ENCODE measurements at regions of chr5 and their contacts with region 1.

Region 1: DNA sequence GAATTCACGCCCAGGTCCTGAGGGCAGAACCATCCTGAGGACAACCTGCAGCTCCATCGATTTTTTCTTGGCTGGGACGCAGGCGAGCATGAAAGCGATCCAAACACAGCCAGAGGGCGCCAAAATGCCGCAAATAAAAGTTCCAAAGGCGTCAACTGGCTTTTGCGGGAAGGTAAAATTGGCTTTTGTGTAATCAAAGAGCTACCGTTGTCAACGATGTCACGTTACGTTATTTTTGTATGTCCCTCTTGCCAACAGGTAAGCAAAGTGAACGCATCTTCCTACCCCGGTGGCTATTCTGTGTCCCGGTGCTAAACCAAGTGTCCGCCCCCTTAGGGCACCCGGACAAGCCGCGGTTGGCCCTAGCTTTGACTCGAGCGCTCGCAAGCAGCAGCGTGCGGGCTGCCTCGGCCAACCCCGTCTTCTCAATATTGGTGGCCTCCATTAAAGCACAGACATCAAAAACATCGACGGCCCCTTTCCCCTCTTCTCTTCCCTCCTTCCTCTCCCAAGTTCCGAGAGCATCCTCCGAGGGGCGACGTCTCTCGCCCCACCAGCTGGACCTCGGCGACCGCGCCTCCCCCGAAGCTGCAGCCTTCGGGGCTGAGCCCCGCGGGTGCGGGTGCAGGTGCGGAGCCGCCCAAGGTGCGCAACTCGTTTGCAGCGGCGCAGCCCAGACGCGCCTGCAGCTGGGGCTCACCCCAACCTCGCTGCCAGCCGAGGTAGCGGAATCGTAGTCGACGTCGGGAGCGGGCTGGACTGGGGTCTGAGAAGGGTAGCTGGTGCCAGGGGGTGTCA is 1.1 kb upstream of the BASP1 start:
- DNase-seq: peak; percentile 79
- H3K4me3 ChIP-seq: peak overlapping the region; percentile 9 to 67 (median 30)
- H3K27ac ChIP-seq: no peak overlapping the region
- H3K4me1 ChIP-seq: peaks cover 17% of the 10 kb centered on the region
- H3K27me3 ChIP-seq: no peaks in the 10 kb centered on the region
- CTCF ChIP-seq: peak; percentile 84 to 86

Region 2: DNA sequence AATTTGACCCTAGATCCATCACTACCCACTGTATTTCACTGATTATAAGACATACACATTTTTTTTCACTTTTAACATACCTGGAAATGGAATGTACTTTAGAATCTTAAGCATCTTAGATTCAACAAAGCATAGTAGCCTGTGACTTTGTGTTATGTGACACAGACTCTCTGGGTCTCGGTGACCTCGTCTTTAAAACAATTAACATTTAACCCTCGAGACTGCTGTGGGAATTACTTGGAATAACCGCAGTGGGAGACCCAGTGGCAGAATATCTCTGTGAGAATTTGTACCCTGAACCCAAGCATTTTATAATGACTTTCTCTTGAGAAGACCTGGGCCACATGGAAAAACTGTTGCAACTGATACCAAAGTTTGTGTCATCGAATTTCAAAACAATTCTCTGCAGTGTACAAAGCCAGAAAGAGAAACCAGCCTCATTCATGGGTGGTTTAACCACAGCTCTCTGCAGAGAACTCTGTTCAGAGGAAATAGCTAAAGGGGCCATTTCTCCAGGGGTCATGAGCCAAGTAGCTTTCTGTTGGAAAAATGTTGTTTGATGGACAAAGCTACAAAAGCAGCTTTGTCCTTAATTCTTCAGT is 589.6 kb before region 1 on chr5:
- CTCF ChIA-PET with region 1: no interaction called
- dilution Hi-C with region 1: no loop called
- in situ Hi-C with region 1: no loop called
- intact Hi-C with region 1: no loop called
- DNase-seq: no peak
- H3K4me3 ChIP-seq: no peak overlapping the region
- H3K27ac ChIP-seq: no peak overlapping the region
- H3K4me1 ChIP-seq: no peaks in the 10 kb centered on the region
- H3K27me3 ChIP-seq: peaks cover 4% of the 10 kb centered on the region
- CTCF ChIP-seq: no peak

Region 3: DNA sequence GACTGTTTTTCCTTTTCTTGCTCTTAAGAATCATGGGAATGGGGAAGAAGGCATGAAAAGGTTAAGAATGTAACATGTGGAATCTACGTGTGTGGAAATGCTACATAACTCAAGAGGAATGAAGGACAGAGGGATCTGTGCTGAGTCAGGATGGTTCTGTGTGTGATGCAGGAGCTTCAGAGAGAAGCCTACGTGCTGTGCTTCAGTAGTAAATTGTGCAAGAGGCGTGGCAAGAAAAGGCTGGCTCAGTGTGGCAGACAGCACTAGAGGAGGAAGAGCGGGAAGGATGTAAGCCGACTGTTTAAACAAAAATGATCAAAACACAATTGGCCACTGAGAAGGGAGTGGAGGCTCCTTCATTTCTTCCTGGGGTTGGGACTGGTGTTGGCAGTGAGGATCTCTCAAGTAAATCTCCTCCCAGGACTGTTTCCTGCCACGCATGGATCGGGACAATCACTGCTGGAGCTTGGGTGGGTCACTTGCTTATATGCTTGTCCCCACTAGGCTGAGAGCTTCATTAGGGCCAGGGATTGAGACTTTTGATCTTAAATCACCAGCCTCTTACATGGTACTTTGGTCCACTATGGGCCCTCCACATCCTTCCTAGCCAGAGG is 58.4 kb before region 1 on chr5:
- CTCF ChIA-PET with region 1: no interaction called
- dilution Hi-C with region 1: no loop called
- in situ Hi-C with region 1: no loop called
- intact Hi-C with region 1: no loop called
- DNase-seq: peak; percentile 77
- H3K4me3 ChIP-seq: no peak overlapping the region
- H3K27ac ChIP-seq: no peak overlapping the region
- H3K4me1 ChIP-seq: peaks cover 10% of the 10 kb centered on the region
- H3K27me3 ChIP-seq: no peaks in the 10 kb centered on the region
- CTCF ChIP-seq: no peak

Region 4: DNA sequence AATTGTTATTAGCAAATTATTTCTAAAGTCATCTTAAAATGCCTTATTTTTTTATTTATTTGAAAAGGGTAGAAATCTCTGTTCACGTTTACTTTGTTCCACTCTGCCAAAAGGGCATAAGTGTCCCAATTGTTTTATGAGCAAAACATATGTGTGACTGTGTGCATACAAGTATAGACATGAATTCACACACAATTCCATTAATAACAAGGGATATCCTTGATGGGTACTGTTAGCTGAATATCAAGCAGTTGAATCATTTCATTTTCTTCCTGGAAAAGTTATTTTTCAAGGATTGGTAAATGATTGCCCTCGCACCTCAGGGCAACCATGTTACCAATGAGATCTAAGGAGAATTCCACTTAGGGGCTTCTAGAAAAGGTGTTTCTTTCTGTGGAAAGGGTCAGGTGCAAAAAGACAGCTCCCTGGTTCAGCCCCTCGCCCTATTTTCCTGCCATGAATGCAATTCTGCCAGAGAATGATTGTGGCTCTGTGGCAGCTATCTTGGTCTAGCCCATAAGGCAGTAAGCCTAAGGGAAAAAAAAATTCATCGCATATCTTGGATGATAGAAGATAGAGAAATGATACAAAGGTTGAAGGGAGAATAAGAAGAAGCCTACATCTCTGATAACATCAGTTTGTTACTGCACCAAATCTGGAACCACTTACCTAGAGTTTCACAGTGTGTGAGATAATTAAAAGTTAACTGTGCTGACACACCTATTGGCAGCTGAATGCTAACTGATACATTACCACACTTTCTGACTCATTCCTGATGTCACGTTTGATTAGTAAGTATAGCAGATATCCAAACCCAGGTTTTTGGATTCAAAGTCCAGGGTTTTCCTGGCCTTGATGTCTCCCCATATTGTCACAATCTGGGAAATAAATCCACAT is 189.8 kb after region 1 on chr5:
- CTCF ChIA-PET with region 1: interaction called, 5 read pairs
- dilution Hi-C with region 1: no loop called
- in situ Hi-C with region 1: no loop called
- intact Hi-C with region 1: loop called (anchors 5 kb)
- DNase-seq: peak; percentile 72
- H3K4me3 ChIP-seq: no peak overlapping the region
- H3K27ac ChIP-seq: peak overlapping the region; percentile 64
- H3K4me1 ChIP-seq: peaks cover 15% of the 10 kb centered on the region
- H3K27me3 ChIP-seq: no peaks in the 10 kb centered on the region
- CTCF ChIP-seq: no peak

Region 5: DNA sequence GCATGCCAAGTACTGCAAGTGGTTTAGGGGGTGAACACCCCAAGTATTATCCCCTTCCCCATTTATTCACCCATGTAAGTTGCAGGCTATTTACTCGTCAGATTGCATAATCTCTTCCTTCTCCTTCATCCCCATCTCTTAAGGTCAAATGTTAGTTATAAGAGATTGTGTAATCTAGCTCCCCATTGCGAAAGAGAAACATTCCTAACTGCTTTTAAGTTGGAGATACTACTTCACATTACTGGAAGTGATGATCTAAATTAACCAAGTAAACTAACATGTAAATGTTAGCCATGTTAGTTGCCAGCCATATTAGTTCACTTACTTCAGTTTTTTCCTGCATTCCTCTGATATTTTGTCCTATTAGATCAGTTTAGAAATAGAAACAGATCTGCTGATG is 680.2 kb after region 1 on chr5:
- CTCF ChIA-PET with region 1: interaction called, 8 read pairs
- dilution Hi-C with region 1: no loop called
- in situ Hi-C with region 1: no loop called
- intact Hi-C with region 1: loop called (anchors 10 kb)
- DNase-seq: peak; percentile 55
- H3K4me3 ChIP-seq: no peak overlapping the region
- H3K27ac ChIP-seq: no peak overlapping the region
- H3K4me1 ChIP-seq: peaks cover 21% of the 10 kb centered on the region
- H3K27me3 ChIP-seq: no peaks in the 10 kb centered on the region
- CTCF ChIP-seq: no peak

Region 6: GRCh38 chr5:18113721-18114120 is 897.3 kb after region 1 on chr5:
- CTCF ChIA-PET with region 1: no interaction called
- dilution Hi-C with region 1: no loop called
- in situ Hi-C with region 1: loop called in 1 of 2 experiments (anchors 25 kb)
- intact Hi-C with region 1: loop called (anchors 1 kb)
- DNase-seq: peak; percentile 8
- H3K4me3 ChIP-seq: no peak overlapping the region
- H3K27ac ChIP-seq: no peak overlapping the region
- H3K4me1 ChIP-seq: no peaks in the 10 kb centered on the region
- H3K27me3 ChIP-seq: no peaks in the 10 kb centered on the region
- CTCF ChIP-seq: peak in 1 of 2 donors; percentile 46

Region 7: GRCh38 chr5:18305297-18305924 is 1089.0 kb after region 1 on chr5:
- CTCF ChIA-PET with region 1: interaction called, 6 read pairs
- dilution Hi-C with region 1: no loop called
- in situ Hi-C with region 1: no loop called
- intact Hi-C with region 1: loop called (anchors 1 kb)
- DNase-seq: no peak
- H3K4me3 ChIP-seq: no peak overlapping the region
- H3K27ac ChIP-seq: no peak overlapping the region
- H3K4me1 ChIP-seq: no peaks in the 10 kb centered on the region
- H3K27me3 ChIP-seq: no peaks in the 10 kb centered on the region
- CTCF ChIP-seq: peak; percentile 88 to 89